Prostate gland (tissue), 2 donors: ENCODE measurements at regions of chr3 and their contacts with region 1.

Region 1: GRCh38 chr3:180912304-180913296 is at the start of gene FXR1:
- DNase-seq: peak; percentile 89
- H3K4me3 ChIP-seq: peak within 1 kb of the TSS; percentile 88 to 91
- H3K27ac ChIP-seq: peak within 1 kb of the TSS; percentile 93 to 95
- H3K4me1 ChIP-seq: peaks cover 6% of the 10 kb centered on the region
- H3K27me3 ChIP-seq: no peaks in the 10 kb centered on the region
- CTCF ChIP-seq: peak; percentile 50 to 84 (median 64)
- POLR2A ChIP-seq: peak; percentile 70
- total RNA-seq, gene FXR1: 80.2 to 114 TPM

Region 2: DNA sequence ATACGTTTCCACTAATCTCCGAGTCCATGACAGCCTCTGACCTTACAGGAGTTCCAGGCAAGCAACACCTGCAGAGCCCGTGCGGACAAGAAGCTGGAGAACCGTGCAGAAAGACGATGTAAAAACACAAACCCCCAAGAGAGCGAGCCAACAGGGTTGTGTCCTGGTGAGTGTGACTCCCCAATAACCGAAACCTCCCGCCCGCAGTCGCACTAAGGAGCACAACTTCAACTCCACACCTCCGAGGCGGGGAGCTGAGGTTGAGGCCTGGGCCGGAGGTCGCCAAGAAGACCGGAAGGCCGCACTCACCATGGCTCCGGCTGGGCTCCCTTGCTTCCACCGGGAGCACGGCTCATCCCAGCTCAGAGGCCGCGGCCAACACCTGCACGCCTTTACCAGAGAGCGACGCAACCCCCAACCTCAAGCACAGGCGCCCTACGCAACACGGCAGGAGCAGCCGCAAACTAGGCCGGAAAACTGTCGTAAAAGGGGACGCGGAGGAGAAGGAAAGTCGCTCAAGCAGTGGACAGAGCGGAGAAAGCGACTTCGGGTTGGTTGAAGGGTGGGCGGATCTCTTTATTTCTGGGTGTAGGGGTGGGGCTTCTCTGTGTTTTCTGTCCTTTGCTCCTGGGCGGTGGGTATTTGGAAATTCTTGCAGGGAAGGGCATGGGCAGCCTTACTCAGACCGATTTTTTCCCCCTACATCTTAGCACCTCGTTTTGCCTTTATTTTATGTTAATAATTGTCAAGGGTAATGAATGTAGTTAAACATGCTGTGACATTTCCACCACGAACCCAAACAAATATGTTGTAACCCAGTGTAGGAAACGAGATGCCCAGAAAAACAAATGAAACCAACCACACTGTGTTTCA is 76.9 kb after region 1 on chr3 and contains the start of gene DNAJC19:
- intact Hi-C with region 1: loop called (anchors 2 kb)
- DNase-seq: peak; percentile 94
- H3K4me3 ChIP-seq: peak within 1 kb of the TSS; percentile 63 to 76
- H3K27ac ChIP-seq: peak within 1 kb of the TSS; percentile 82 to 86
- H3K4me1 ChIP-seq: no peaks in the 10 kb centered on the region
- H3K27me3 ChIP-seq: no peaks in the 10 kb centered on the region
- CTCF ChIP-seq: no peak
- POLR2A ChIP-seq: peak; percentile 65
- total RNA-seq, gene DNAJC19: 38.1 to 46.0 TPM